HEK293 (cell line): ENCODE measurements at regions of chr5 and their contacts with region 1.

Region 1: DNA sequence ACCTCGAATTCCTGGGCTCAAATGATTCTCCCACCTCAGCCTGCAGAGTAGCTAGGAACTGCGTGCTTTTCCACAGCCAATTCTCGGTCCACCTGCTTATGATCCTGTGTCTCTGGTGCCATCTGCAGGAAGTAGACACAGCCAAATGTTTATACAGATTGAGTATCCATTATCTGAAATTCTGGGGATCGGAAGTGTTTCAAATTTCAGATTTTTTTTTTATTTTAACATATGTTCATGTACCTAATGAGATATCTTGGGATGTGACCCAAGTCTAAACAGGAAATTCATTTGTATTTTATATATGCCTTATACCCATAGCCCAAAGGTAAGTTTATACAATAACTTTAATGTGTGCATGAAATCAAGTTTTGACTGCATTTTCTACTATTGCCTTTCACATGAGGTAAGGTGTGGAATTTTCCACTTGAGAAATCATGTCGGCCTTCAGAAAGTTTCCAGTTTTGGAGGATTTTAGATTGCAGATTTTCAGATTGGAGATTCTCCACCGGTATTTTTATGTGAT is 89.5 kb downstream of the ESM1 start:
- H3K4me3 ChIP-seq: no peak overlapping the region
- H3K27ac ChIP-seq: no peak overlapping the region
- H3K4me1 ChIP-seq: no peaks in the 10 kb centered on the region
- CTCF ChIP-seq: peak; percentile 76

Region 2: GRCh38 chr5:54517174-54518092 is 378.4 kb before region 1 on chr5 and contains the start of gene SNX18:
- CTCF ChIA-PET with region 1: interaction called, 25 read pairs
- POLR2A ChIA-PET with region 1: no interaction called
- H3K4me3 ChIP-seq: peak within 1 kb of the TSS; percentile 83
- H3K27ac ChIP-seq: peak within 1 kb of the TSS; percentile 86
- H3K4me1 ChIP-seq: peaks cover 7% of the 10 kb centered on the region; the same call in 1 of the 2 replicates
- CTCF ChIP-seq: peak; percentile 90

Region 3: DNA sequence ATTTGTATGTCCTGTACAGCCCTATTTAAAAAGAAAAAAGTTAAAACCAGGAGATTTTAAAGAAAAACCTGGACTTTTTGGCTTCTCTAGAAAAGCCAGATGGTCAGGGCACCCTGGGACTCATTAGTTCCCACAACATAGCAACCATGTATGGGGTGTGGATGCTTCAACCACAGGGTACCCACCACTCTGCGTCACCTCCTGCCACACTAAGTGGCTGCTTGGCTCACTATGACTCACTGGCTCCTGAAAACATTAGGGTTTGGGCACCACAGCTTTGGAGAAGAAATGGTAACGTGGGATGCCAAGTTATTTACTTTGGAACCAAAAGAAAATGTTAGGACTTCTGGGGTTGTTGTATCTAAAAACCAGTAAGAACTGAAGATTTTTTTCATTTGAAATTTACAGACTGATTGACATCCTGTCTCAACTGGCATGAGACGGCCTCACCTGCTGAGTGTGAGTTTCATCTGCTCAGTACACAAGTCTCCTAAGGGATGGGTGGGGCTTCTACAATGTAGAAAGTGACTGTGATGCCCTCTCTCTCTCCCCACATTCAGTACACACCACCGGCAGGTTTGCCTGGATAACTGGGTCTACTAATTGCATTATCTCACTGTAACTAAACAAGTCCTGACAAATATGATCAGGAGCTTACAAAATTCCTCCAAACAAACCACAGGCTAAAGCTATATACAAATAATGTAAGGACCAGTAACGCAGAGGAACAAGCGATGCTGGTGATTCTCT is 14.4 kb before region 1 on chr5:
- CTCF ChIA-PET with region 1: interaction called, 13 read pairs
- POLR2A ChIA-PET with region 1: no interaction called
- H3K4me3 ChIP-seq: no peak overlapping the region
- H3K27ac ChIP-seq: no peak overlapping the region
- H3K4me1 ChIP-seq: no peaks in the 10 kb centered on the region
- CTCF ChIP-seq: no peak